ENCODE measurements at regions of chr9 and their contacts with region 1.

Region 1: DNA sequence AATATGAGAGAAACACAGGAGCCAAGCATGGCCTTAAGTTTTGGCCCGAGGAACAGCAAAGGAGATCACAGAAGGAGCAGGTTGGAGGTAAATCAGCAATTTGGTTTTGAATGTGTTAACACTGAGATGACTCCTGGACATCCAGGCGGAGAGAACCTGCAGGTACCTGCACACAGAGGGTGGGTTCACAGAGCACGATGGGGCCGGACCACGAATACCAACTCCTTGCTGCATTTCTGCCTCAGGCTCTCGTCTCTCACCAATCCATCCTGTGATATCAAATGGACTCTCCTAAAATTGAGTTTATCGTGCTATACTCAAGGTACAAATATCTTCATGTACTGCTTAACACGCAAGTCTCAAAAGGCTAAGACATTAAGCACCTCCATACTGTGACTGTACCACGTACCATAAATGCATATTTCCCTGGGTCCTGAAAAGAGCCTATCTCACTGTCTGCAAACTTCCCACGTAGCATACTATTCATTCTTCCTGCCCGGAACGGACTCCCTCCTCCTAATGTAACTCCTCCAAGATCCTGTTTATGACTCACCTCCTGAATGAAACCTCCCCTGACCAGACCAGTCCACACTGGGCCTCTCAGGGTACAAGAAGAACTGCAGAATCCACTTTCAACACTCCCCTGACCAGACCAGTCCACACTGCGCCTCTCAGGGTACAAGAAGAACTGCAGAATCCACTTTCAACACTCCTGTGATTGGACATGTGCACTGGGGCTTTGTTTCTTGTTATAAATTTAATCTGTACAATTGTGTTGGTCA is 380.8 kb upstream of the RFX3 start:
- DNase-seq: no peak
- H3K4me3 Mint-ChIP-seq: no peak overlapping the region
- H3K27ac Mint-ChIP-seq: no peak overlapping the region
- H3K4me1 Mint-ChIP-seq: peaks cover 71% of the 10 kb centered on the region
- H3K27me3 Mint-ChIP-seq: no peaks in the 10 kb centered on the region

Region 2: GRCh38 chr9:3478549-3478953 is 428.1 kb before region 1 on chr9:
- intact Hi-C with region 1: loop called (anchors 5 kb)
- DNase-seq: no peak
- H3K4me3 Mint-ChIP-seq: peak overlapping the region; percentile 79
- H3K27ac Mint-ChIP-seq: peak overlapping the region; percentile 90
- H3K4me1 Mint-ChIP-seq: peaks cover 61% of the 10 kb centered on the region
- H3K27me3 Mint-ChIP-seq: no peaks in the 10 kb centered on the region

Region 3: DNA sequence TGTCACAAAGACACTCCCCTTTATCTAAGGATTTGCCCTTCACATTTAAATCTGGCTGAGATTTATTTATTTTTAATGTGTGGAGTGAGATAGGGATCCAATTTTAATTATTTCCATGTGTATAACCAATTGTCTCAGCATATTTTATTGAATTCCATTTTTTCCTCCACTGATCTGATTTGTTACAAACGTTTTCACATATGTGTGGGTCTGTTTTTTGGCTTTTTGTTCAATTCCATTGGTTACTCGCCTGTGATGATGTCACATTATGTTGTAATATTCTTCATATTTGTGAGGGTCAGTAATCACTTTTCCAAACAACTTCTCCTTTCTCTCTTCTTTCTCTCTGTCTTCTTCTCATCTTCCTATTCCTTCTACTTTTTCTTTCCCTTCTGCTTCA is 102.5 kb before region 1 on chr9:
- intact Hi-C with region 1: no loop called
- DNase-seq: no peak
- H3K4me3 Mint-ChIP-seq: no peak overlapping the region
- H3K27ac Mint-ChIP-seq: no peak overlapping the region
- H3K4me1 Mint-ChIP-seq: no peaks in the 10 kb centered on the region
- H3K27me3 Mint-ChIP-seq: peaks cover 5% of the 10 kb centered on the region

Region 4: GRCh38 chr9:3868012-3868411 is 38.6 kb before region 1 on chr9:
- intact Hi-C with region 1: loop called (anchors 1 kb)
- DNase-seq: no peak
- H3K4me3 Mint-ChIP-seq: no peak overlapping the region
- H3K27ac Mint-ChIP-seq: no peak overlapping the region
- H3K4me1 Mint-ChIP-seq: peaks cover 57% of the 10 kb centered on the region
- H3K27me3 Mint-ChIP-seq: no peaks in the 10 kb centered on the region

Region 5: DNA sequence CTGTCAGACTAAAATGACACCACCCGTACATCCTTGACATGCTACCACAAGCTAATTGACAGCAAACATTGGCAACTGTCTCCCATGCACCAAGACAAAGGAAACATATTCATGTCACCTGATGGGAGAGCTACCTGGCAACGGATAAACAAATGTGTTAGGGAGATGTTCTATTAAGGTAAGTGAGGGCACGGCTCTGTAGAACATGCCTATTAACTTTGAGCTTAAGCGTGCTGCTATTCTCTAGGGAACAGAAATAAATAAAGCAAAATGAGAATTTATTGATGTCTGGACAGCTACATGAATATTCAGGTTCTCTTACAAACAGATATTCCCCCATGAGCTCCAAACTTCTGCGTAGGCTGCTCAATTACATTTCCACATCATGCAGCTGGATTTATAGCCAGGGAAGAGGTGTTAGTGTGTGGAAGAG is 19.4 kb before region 1 on chr9:
- intact Hi-C with region 1: loop called (anchors 1 kb)
- DNase-seq: no peak
- H3K4me3 Mint-ChIP-seq: no peak overlapping the region
- H3K27ac Mint-ChIP-seq: no peak overlapping the region
- H3K4me1 Mint-ChIP-seq: peaks cover 51% of the 10 kb centered on the region
- H3K27me3 Mint-ChIP-seq: no peaks in the 10 kb centered on the region

Region 6: DNA sequence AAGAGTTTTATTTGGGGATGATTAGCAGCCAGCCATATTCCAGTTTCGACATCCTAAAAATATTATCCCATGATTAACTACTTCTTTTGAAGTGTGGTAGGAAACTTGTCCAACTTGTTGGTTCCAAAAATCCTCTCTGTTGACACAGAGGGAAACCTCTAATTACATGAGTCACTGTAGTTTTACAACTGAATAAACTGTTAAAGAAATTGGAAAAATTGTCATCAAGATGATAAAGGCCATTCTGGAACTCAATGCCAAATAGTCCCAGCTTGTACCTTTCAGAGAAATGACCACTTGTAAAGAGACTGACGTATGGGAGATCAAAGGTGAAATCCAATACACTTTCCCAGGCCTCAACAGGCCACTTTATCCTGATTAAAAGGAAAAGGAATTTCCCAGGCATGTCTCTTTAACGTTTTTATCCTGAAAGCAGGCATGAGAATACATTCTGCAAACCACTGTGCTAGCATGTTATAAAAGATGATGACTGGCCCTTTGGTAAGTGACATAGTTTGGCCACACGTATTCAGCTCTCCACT is 131.6 kb after region 1 on chr9:
- intact Hi-C with region 1: no loop called
- DNase-seq: no peak
- H3K4me3 Mint-ChIP-seq: no peak overlapping the region
- H3K27ac Mint-ChIP-seq: no peak overlapping the region
- H3K4me1 Mint-ChIP-seq: peaks cover 2% of the 10 kb centered on the region
- H3K27me3 Mint-ChIP-seq: no peaks in the 10 kb centered on the region

Region 7: DNA sequence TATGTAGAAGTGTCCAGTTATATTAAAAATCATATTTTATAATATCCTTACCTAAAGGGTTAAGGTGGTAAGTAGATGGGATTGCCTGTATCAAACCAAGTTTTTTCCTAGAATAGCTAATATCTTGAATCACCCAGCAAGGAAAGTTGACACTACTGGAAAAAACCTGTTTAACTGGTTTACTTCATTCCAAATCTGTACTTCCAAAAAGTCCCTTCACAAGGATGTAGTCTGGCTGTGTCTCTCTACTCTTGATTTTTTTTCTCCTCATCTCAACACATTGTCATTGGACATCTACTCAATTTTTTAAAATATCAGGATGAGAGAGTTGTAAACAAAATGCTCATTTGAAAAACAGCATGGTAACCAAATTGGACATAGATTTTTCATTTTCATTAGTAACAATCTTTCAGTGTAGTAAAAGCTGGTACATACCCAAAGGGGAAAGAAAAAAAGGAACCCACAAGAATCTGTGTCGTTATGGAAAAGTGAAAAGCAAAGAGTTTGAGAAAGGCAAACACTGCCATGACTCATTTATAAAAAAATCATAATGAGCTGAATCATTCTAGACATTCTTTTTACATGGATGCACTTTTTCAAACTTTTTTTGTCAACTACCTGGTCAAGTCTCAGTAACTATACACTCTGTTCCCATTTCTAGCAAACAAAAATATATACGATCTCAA is 219.7 kb after region 1 on chr9:
- intact Hi-C with region 1: no loop called
- DNase-seq: no peak
- H3K4me3 Mint-ChIP-seq: no peak overlapping the region
- H3K27ac Mint-ChIP-seq: no peak overlapping the region
- H3K4me1 Mint-ChIP-seq: no peaks in the 10 kb centered on the region
- H3K27me3 Mint-ChIP-seq: peaks cover 3% of the 10 kb centered on the region

Region 8: GRCh38 chr9:4228606-4229005 is 322.0 kb after region 1 on chr9:
- intact Hi-C with region 1: loop called (anchors 10 kb)
- DNase-seq: no peak
- H3K4me3 Mint-ChIP-seq: no peak overlapping the region
- H3K27ac Mint-ChIP-seq: no peak overlapping the region
- H3K4me1 Mint-ChIP-seq: peaks cover 19% of the 10 kb centered on the region
- H3K27me3 Mint-ChIP-seq: no peaks in the 10 kb centered on the region

Measured in activated T-helper 2 cell treated with anti-CD3 and anti-CD28 coated beads, Interferon-gamma antibody, Interleukin-2, Interleukin-4, amounts not matched to agents 10 μg/mL and 5 μg/mL and 100 μg/mL, durations not matched to agents 14 hours and 24 hours and 36 hours (primary cell).